Activated CD4-positive, alpha-beta memory T cell treated with anti-CD3 and anti-CD28 coated beads, Interleukin-2, amount 10 ng/mL, durations not matched to agents 7 days and 5 days (primary cell): ENCODE measurements at regions of chr2 and their contacts with region 1.

Region 1: DNA sequence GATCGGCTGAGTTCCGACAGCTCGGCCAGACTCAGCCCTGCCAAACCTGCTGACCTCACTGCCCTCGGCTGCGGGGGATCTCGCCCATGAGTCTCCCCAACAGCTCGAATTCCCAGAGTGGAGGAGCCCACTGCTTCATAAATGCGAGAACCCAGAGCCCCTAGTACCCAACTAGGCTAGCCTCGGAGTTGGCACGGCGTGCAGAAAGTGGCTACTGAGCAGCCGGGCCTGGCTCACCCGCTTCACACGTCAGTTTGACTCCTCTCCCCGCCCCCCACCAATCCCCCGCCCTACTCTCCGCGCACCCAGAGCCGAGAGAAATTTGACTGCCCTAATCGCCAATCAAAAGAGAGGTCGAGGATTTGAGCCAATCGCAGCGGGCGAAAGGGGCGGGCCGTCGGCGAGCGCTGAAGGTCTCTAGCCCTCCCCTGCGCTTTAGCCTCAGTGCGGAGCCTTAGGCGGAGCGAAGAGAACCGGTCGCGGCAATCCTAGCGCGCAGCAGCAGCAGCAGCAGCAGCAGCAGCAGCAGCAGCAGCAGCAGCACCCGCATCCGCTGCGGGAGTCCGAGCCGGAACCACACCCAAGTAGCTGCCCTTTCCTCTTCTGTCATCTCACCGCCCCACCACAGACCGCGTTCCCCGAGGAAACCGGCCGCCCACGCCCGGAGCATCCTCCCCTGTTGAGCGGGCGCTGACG is at the start of gene GLS:
- DNase-seq: peak; percentile 98
- H3K4me3 Mint-ChIP-seq: peak within 1 kb of the TSS; percentile 94
- H3K27ac Mint-ChIP-seq: peak within 1 kb of the TSS; percentile 100
- H3K4me1 Mint-ChIP-seq: peaks cover 48% of the 10 kb centered on the region
- H3K27me3 Mint-ChIP-seq: no peaks in the 10 kb centered on the region
- total RNA-seq, gene GLS: 146 to 150 TPM

Region 2: DNA sequence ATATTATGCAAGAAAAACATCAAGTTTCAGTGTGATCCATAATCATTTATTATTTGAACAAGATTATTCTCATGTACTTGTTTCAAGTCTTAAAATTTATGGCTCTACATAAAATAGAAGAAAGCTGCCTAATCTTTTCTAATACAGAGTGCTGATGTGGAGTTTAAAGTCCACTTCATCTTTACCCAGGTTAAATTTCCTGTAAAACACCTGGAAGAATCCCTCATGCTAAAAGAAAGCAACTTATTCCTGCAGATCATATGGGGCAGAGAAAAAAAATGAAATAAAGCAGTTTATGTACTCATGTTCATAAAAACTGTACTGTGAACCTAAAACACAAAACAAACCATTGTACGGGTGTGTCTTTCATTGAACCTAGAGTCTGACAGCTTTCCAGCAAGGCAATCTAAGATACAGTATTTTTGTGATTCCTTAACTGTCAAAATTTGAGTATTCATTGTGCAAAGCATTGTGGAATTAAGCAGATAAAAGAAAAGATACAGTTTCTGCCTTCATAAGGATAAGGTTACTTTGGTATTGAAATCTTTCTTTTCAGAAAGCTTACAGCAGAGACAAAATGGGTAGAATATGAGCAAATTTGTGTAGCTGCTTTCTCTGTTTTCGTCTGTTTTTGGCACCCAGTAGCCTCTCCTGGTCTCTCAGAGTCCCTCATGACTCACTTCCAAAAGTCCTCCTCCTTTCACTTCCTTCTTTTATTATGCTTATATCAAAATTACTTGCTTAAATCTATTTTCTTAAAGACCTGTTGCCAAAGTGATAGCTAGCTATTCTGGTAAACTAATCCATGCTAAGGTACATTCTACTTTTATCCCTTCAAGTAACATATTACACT is 26.8 kb before region 1 on chr2:
- CTCF ChIA-PET with region 1: interaction called, 32 read pairs
- POLR2A ChIA-PET with region 1: interaction called, 18 read pairs
- DNase-seq: no peak
- H3K4me3 Mint-ChIP-seq: no peak overlapping the region
- H3K27ac Mint-ChIP-seq: no peak overlapping the region
- H3K4me1 Mint-ChIP-seq: peaks cover 1% of the 10 kb centered on the region
- H3K27me3 Mint-ChIP-seq: no peaks in the 10 kb centered on the region

Region 3: GRCh38 chr2:190903693-190904450 is 23.3 kb after region 1 on chr2:
- CTCF ChIA-PET with region 1: no interaction called
- POLR2A ChIA-PET with region 1: interaction called, 33 read pairs
- DNase-seq: no peak
- H3K4me3 Mint-ChIP-seq: no peak overlapping the region
- H3K27ac Mint-ChIP-seq: peak overlapping the region; percentile 37
- H3K4me1 Mint-ChIP-seq: peaks cover 13% of the 10 kb centered on the region
- H3K27me3 Mint-ChIP-seq: no peaks in the 10 kb centered on the region

Region 4: GRCh38 chr2:190940454-190940853 is 59.9 kb after region 1 on chr2:
- CTCF ChIA-PET with region 1: no interaction called
- POLR2A ChIA-PET with region 1: no interaction called
- DNase-seq: no peak
- H3K4me3 Mint-ChIP-seq: no peak overlapping the region
- H3K27ac Mint-ChIP-seq: no peak overlapping the region
- H3K4me1 Mint-ChIP-seq: no peaks in the 10 kb centered on the region
- H3K27me3 Mint-ChIP-seq: no peaks in the 10 kb centered on the region

Region 5: GRCh38 chr2:191020221-191020741 is 139.8 kb after region 1 on chr2:
- CTCF ChIA-PET with region 1: interaction called, 3 read pairs
- POLR2A ChIA-PET with region 1: interaction called, 69 read pairs
- DNase-seq: peak; percentile 95
- H3K4me3 Mint-ChIP-seq: no peak overlapping the region
- H3K27ac Mint-ChIP-seq: no peak overlapping the region
- H3K4me1 Mint-ChIP-seq: peaks cover 41% of the 10 kb centered on the region
- H3K27me3 Mint-ChIP-seq: no peaks in the 10 kb centered on the region

Region 6: GRCh38 chr2:191114403-191114886 is 233.9 kb after region 1 on chr2:
- CTCF ChIA-PET with region 1: no interaction called
- POLR2A ChIA-PET with region 1: interaction called, 20 read pairs
- DNase-seq: peak; percentile 39
- H3K4me3 Mint-ChIP-seq: peak overlapping the region; percentile 61
- H3K27ac Mint-ChIP-seq: peak overlapping the region; percentile 94
- H3K4me1 Mint-ChIP-seq: peaks cover 71% of the 10 kb centered on the region
- H3K27me3 Mint-ChIP-seq: no peaks in the 10 kb centered on the region